ENCODE measurements at regions of chr1 and their contacts with region 1.

Region 1: DNA sequence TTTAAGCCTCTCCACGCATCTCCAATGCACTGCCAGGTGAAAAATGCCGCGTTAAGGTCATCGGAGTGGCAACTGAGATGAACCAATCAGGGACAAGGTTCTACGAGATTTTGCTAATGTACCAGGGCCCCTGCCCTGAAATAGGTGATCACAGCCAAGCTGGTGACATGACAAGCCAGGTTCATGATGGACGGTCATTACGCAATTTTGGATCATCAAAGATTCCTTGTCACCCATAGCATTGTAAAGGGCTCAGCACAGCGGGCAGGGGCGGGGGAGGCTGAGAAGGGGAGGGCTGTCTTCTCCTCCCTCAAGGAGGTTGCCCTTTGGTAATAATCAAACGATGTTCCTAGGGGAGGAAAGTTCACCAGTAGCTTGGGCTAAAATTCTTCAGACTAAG is 475.5 kb downstream of the NPHP4 start:
- DNase-seq: peak in 1 of 2 donors; percentile 69
- H3K4me3 ChIP-seq: no peak overlapping the region
- CTCF ChIP-seq: no peak
- POLR2A ChIP-seq: no peak

Region 2: GRCh38 chr1:5404412-5405203 is 112.1 kb before region 1 on chr1:
- intact Hi-C with region 1: no loop called
- DNase-seq: no peak
- H3K4me3 ChIP-seq: no peak overlapping the region
- CTCF ChIP-seq: no peak
- POLR2A ChIP-seq: no peak

Region 3: DNA sequence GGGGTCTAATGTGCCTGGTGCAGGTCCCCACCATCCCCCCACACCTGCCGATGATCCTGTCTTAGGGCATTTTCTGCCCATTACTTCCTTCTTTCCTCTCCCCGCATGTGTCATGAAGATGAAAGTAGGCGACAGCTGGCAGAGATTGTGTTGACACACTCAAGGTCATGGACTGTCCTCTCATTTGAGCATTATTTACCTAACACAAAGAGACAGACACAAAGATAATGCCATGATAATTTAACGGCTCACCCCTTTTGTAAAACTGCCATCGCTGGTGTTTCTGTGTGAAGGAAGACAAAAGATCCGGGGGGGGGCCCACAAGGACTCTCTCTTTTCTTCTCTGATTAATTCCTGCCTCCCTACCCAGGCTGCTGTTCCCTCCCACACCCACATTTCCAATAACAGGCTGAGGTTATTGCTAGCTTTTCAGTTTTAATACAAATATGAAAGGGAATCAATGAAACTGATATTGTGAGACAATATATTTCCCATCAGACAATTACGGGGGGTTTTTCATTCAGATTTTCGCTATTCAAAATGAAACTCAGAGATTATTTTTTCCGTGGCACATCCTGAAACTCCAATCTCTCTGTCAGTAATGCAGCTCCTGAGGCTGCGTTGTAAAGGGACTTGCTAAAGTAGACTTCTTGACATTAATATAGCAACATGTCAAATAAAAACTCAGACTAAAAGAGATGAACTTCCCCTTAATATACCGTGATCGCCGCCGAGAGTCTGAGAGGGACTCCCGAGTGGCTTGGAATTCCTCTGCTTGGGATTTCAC is 85.7 kb before region 1 on chr1:
- intact Hi-C with region 1: loop called (anchors 1 kb)
- DNase-seq: no peak
- H3K4me3 ChIP-seq: no peak overlapping the region
- CTCF ChIP-seq: no peak
- POLR2A ChIP-seq: no peak